ENCODE measurements at regions of chr14 and their contacts with region 1.

Region 1: DNA sequence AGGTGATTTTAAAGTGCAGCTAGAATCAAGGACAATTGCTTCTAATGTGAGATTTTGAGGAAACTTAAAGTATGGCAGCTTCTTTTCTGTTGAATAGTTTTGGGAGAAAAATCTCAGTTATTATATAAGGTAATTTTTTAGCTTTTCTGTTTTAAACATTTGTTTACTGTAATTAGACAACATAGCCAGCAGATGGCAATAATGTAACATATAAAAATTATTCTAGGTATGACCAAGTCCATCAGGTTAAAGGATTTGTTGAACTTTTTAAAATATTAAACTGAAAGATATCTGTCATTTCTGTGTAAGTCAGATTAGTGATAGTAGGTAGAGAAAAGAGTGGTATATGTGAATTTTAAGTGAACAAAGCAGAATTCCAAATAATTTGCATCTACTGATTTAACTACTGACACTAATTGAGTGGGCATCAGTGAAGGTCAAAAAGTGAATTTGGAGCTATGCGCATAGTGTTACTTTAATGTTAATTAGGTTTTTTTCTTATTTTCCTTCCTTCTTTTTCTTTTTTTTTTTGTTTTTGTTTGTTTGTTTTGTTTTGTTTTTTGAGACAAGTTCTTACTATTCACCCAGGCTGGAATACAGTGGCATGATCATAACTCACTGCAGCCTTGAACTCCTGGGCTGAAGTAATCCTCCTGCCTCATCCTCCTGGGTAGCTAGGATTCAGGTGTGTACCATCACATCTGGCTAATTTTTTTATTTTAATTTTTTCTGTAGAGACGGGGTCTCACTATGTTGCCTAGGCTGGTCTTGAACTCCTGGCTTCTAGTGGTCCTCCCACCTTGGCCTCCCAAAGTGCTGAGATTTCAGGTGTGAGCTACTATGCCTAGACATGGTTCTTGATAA is 18.6 kb downstream of the PRORP start:
- DNase-seq: no peak
- H3K4me3 ChIP-seq: no peak overlapping the region
- H3K27ac ChIP-seq: no peak overlapping the region
- H3K4me1 ChIP-seq: no peaks in the 10 kb centered on the region
- H3K27me3 ChIP-seq: no peaks in the 10 kb centered on the region
- CTCF ChIP-seq: peak in 1 of 3 experiments; percentile 79
- POLR2A ChIP-seq: no peak

Region 2: DNA sequence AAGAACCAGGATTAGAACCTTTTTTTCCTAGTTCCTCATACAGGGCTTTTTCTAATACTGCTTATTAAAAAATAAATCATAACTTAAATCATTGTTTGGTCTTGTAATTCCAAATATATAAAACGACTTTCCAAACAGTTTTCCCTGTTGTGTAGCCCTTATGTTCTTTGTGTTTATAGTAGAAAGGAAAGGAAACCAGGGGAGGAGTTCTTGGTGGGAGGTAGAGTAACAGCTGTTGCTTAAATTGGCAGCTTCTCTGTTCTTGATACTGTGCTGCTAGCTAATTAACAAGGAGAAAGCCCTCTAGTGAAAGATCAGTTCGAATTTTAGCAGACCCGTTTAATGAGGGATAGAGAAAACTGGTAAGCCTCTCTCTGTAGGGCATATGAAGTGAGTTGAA is 143.2 kb before region 1 on chr14:
- intact Hi-C with region 1: no loop called
- DNase-seq: no peak
- H3K4me3 ChIP-seq: no peak overlapping the region
- H3K27ac ChIP-seq: no peak overlapping the region
- H3K4me1 ChIP-seq: no peaks in the 10 kb centered on the region
- H3K27me3 ChIP-seq: no peaks in the 10 kb centered on the region
- CTCF ChIP-seq: no peak
- POLR2A ChIP-seq: no peak

Region 3: GRCh38 chr14:35414365-35414764 is 273.4 kb after region 1 on chr14:
- intact Hi-C with region 1: loop called (anchors 5 kb)
- DNase-seq: no peak
- H3K4me3 ChIP-seq: no peak overlapping the region
- H3K27ac ChIP-seq: no peak overlapping the region
- H3K4me1 ChIP-seq: peaks cover 9% of the 10 kb centered on the region
- H3K27me3 ChIP-seq: no peaks in the 10 kb centered on the region
- CTCF ChIP-seq: no peak
- POLR2A ChIP-seq: no peak

Measured in vagina (tissue), 2 donors.